Heart right ventricle (tissue), 16 donors: ENCODE measurements at regions of chrX and their contacts with region 1.

Region 1: GRCh38 chrX:10189317-10190268 is 32.8 kb downstream of the CLCN4 start:
- DNase-seq: peak; percentile 52 to 58
- ATAC-seq: peak; percentile 85 to 94 (median 89)
- H3K4me3 ChIP-seq: no peak overlapping the region
- H3K27ac ChIP-seq: no peak overlapping the region
- H3K4me1 ChIP-seq: peaks cover 0 to 15% (median 3%) of the 10 kb centered on the region in 9 donors
- H3K27me3 ChIP-seq: peaks cover 0 to 15% (median 0%) of the 10 kb centered on the region in 7 donors
- CTCF ChIP-seq: peak; percentile 41 to 85 (median 70)

Region 2: GRCh38 chrX:10326578-10326977 is 137.0 kb after region 1 on chrX:
- intact Hi-C with region 1: loop called in 4 of 10 experiments (anchors 2 to 10 kb)
- DNase-seq: peak in 1 of 2 donors; percentile 3
- ATAC-seq: peak in 1 of 8 donors; percentile 85
- H3K4me3 ChIP-seq: no peak overlapping the region
- H3K27ac ChIP-seq: no peak overlapping the region
- H3K4me1 ChIP-seq: no peaks in the 10 kb centered on the region
- H3K27me3 ChIP-seq: peaks cover 0 to 4% (median 0%) of the 10 kb centered on the region in 7 donors
- CTCF ChIP-seq: peak in 7 of 9 donors; percentile 23 to 45 (median 30)

Region 3: DNA sequence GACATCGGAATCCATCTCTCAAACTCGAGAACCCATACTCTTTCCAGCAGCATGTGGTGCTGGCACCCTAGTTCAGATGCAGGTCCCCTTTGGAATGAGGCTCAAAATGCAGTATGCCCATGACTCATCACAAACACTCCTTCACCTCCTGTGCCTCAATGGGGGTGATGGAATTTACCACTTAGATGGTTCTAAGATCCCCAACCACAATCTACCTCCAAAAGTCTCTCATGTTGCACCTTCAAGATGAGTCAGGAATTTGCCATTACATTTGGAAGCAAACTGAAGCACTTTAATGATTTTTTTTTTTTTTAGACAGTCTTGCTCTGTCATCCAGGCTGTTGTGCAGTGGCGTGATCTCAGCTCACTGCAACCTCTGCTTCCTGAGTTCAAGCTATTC is 439.3 kb after region 1 on chrX:
- intact Hi-C with region 1: loop called in 3 of 10 experiments (anchors 2 to 5 kb)
- DNase-seq: no peak
- ATAC-seq: no peak
- H3K4me3 ChIP-seq: no peak overlapping the region
- H3K27ac ChIP-seq: no peak overlapping the region
- H3K4me1 ChIP-seq: peaks cover 0 to 4% (median 0%) of the 10 kb centered on the region in 9 donors
- H3K27me3 ChIP-seq: peaks cover 0 to 8% (median 0%) of the 10 kb centered on the region in 7 donors
- CTCF ChIP-seq: no peak

Region 4: GRCh38 chrX:10636337-10636736 is 446.7 kb after region 1 on chrX:
- intact Hi-C with region 1: loop called in 5 of 10 experiments (anchors 2 to 5 kb)
- DNase-seq: peak in 1 of 2 donors; percentile 34
- ATAC-seq: peak in 7 of 8 donors; percentile 44 to 79 (median 55)
- H3K4me3 ChIP-seq: peak overlapping the region in 3 of 10 donors; percentile 17 to 31 (median 20)
- H3K27ac ChIP-seq: no peak overlapping the region
- H3K4me1 ChIP-seq: peaks cover 0 to 19% (median 0%) of the 10 kb centered on the region in 9 donors
- H3K27me3 ChIP-seq: no peaks in the 10 kb centered on the region
- CTCF ChIP-seq: peak in 8 of 9 donors; percentile 11 to 71 (median 54)

Region 5: GRCh38 chrX:10722851-10723250 is 533.3 kb after region 1 on chrX:
- intact Hi-C with region 1: loop called in 9 of 10 experiments (anchors 1 to 10 kb)
- DNase-seq: peak in 1 of 2 donors; percentile 54
- ATAC-seq: peak in 5 of 8 donors; percentile 25 to 77 (median 75)
- H3K4me3 ChIP-seq: no peak overlapping the region
- H3K27ac ChIP-seq: no peak overlapping the region
- H3K4me1 ChIP-seq: no peaks in the 10 kb centered on the region
- H3K27me3 ChIP-seq: no peaks in the 10 kb centered on the region
- CTCF ChIP-seq: peak; percentile 42 to 79 (median 67)

Region 6: GRCh38 chrX:11100281-11101035 is 910.9 kb after region 1 on chrX:
- intact Hi-C with region 1: loop called in 3 of 10 experiments (anchors 5 to 10 kb)
- DNase-seq: peak in 1 of 2 donors; percentile 15
- ATAC-seq: peak in 4 of 8 donors; percentile 39 to 61 (median 46)
- H3K4me3 ChIP-seq: no peak overlapping the region
- H3K27ac ChIP-seq: no peak overlapping the region
- H3K4me1 ChIP-seq: peaks cover 0 to 5% (median 0%) of the 10 kb centered on the region in 9 donors
- H3K27me3 ChIP-seq: no peaks in the 10 kb centered on the region
- CTCF ChIP-seq: peak in 7 of 9 donors; percentile 10 to 52 (median 43)

Region 7: DNA sequence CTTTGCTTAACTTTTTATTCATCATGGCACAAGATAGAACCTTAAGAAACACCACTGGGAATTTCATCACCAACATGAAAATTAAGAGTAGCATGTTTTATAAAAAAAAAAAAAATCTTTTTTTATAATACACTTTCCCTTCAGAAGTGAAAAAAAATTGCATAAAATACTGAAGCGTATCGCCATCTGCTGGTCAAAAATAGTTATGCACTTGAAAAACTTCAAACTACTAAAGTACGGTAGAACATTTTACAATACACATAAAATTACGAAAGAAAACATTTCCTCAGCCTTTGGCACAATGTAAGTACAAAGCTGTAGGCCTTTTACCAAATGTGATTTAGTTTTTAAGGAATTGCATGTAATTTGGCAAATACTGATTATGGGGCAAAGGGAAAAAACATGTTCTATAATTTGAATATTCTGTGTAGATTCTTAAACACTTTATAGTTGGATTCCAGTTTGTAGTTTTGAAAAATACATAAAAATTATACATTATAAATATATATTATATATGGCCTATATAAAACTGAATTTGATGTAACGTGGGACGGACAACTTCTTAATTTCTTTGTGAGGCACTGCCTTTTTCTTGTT is 948.0 kb after region 1 on chrX:
- intact Hi-C with region 1: loop called in 3 of 10 experiments (anchors 2 to 5 kb)
- DNase-seq: no peak
- ATAC-seq: no peak
- H3K4me3 ChIP-seq: no peak overlapping the region
- H3K27ac ChIP-seq: no peak overlapping the region
- H3K4me1 ChIP-seq: peaks cover 0 to 3% (median 0%) of the 10 kb centered on the region in 9 donors
- H3K27me3 ChIP-seq: peaks cover 0 to 25% (median 0%) of the 10 kb centered on the region in 7 donors
- CTCF ChIP-seq: peak; percentile 25 to 81 (median 67)